ENCODE measurements at regions of chr21 and their contacts with region 1.

Region 1: GRCh38 chr21:44801468-44802395 is at the start of gene UBE2G2:
- DNase-seq: peak; percentile 59
- ATAC-seq: peak; percentile 89
- H3K4me3 ChIP-seq: peak within 1 kb of the TSS; percentile 79 to 86 (median 80)
- H3K27ac ChIP-seq: peak within 1 kb of the TSS; percentile 88
- H3K4me1 ChIP-seq: peaks cover 53% of the 10 kb centered on the region
- H3K27me3 ChIP-seq: no peaks in the 10 kb centered on the region; a peak in 1 of 5 replicates
- CTCF ChIP-seq: no peak
- EP300 ChIP-seq: no peak
- POLR2A ChIP-seq: peak; percentile 63 to 90
- RAD21 ChIP-seq: peak; percentile 58
- total RNA-seq, gene UBE2G2: 55.4 and 62.0 TPM in 2 replicates

Region 2: DNA sequence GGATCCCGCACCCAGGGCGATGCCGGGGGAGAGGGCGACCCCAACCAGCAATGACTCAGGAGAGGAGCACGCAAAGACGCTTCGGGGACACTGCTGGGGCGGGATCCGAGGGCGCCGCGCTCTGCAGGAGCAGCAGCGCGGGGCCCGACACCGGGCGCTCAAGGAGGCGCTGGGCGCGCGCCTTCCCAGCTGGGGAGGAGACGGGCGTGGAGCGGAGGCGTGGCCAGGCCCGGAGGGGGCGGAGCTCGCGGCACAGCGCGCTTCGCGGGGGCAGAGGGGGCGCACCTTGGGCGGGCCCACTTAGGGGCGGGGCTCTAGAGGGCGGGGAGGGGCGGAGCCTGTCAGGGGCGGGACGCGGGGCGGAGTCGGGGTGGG is 15.8 kb after region 1 on chr21:
- CTCF ChIA-PET with region 1: no interaction called
- POLR2A ChIA-PET with region 1: interaction called, 8 read pairs
- in situ Hi-C with region 1: no loop called
- intact Hi-C with region 1: loop called (anchors 1 kb)
- DNase-seq: peak; percentile 27
- ATAC-seq: peak; percentile 45
- H3K4me3 ChIP-seq: peak overlapping the region; percentile 68 to 88 (median 72); a peak in 5 of 6 replicates
- H3K27ac ChIP-seq: peak overlapping the region; percentile 71
- H3K4me1 ChIP-seq: peaks cover 34% of the 10 kb centered on the region
- H3K27me3 ChIP-seq: no peaks in the 10 kb centered on the region
- CTCF ChIP-seq: no peak
- EP300 ChIP-seq: no peak
- POLR2A ChIP-seq: no peak
- RAD21 ChIP-seq: no peak

Region 3: DNA sequence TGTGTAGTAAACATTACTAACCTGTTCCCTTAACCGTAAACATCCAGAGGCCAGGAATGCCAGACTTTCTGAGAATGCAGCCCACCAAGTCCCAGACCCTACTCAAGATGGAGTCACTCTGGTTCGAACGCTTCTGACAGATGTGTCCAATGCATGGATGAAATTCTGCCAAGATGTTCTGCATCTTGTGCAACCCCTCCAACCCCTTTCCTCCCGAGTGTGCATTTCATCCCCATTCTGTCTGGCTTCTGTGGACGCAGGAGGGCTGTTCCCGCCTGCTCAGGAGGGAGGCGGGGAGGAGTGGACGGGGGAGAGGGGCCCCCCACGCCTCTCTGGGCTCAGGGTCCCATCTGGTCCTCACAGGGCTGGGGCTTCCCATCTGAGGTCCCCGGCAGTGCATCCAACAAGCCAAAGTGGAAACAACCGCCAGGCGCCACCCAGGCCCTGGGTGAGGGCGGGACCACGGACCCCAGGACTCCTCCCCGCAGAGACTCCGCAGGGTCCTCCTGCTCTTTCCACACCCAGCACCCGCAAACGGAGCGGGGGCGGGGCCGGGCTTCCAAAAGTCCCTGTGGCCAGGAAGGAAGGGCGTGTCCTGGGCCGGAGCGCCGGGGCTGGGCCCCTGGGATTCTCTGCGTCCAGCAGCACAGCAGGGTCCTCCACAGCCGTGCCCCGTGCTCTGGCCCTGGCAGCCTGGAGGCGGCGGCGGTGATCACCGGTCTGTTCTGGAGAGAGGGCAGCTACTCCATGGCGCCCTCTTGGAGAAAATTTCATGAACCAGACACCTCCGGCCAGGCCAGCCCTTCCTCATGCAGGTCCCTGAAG is 43.9 kb after region 1 on chr21:
- CTCF ChIA-PET with region 1: interaction called, 4 read pairs
- POLR2A ChIA-PET with region 1: interaction called, 9 read pairs
- in situ Hi-C with region 1: loop called (anchors 5 kb)
- intact Hi-C with region 1: loop called (anchors 1 kb)
- DNase-seq: peak; percentile 76
- ATAC-seq: peak; percentile 77
- H3K4me3 ChIP-seq: peak overlapping the region; percentile 43 to 67 (median 58)
- H3K27ac ChIP-seq: no peak overlapping the region
- H3K4me1 ChIP-seq: peaks cover 52% of the 10 kb centered on the region
- H3K27me3 ChIP-seq: peaks cover 1 to 37% of the 10 kb centered on the region in 2 experiments; a peak in 4 of 5 replicates
- CTCF ChIP-seq: peak; percentile 54
- EP300 ChIP-seq: 0 out of 4 replicates have a peak, but pooled peaks of 1 of the 2 experiments have one; percentile 4
- POLR2A ChIP-seq: no peak
- RAD21 ChIP-seq: 0 out of 2 replicates have a peak, but pooled peaks have one; percentile 24

Region 4: GRCh38 chr21:44873356-44874239 is 71.9 kb after region 1 on chr21 and contains the start of gene PTTG1IP:
- CTCF ChIA-PET with region 1: no interaction called
- POLR2A ChIA-PET with region 1: interaction called, 22 read pairs
- in situ Hi-C with region 1: no loop called
- intact Hi-C with region 1: loop called (anchors 5 kb)
- DNase-seq: peak; percentile 93
- ATAC-seq: peak; percentile 70
- H3K4me3 ChIP-seq: peak within 1 kb of the TSS; percentile 71 to 94 (median 82)
- H3K27ac ChIP-seq: peak within 1 kb of the TSS; percentile 72
- H3K4me1 ChIP-seq: peaks cover 74% of the 10 kb centered on the region
- H3K27me3 ChIP-seq: no peaks in the 10 kb centered on the region; a peak in 1 of 5 replicates
- CTCF ChIP-seq: 0 out of 2 replicates have a peak, but pooled peaks have one; percentile 2
- EP300 ChIP-seq: no peak
- POLR2A ChIP-seq: peak in 1 of 2 experiments; percentile 80; a peak in 2 of 4 replicates
- RAD21 ChIP-seq: no peak
- total RNA-seq, gene PTTG1IP: 89.4 and 161 TPM in 2 replicates

Region 5: DNA sequence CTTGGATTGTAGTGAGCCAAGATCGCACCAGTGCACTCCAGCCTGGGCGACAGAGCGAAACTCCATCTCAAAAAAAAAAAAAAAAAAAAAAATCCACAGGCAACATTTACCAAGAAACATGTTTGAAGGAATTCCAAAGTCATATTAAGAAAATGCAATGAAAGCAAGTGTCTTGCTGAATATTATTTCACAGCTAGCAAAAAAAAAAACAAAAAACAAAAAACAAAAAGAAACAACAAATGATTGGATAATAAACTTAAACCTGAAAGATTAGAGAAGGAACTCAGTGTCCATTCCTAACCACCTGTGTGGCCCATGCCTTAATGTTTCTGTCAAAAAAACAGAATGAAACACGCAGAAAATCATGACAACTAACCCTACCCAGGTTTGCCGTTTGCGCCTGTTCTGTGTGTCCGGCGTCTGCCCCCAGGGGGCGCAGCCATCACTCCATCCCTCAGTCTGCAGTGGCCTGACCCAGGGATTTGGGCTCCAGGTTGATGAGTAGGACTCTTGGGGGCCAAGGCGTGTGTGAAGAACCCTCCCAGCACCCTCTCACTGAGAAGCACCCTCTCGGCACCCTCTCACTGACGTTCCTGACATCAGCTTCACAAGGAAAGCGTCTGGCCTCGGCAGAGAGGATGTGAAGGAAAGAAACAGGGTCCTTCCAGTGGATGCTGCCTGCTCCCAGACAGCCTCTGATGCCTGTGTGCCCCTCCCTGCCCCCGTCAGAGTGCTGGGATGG is 91.0 kb after region 1 on chr21:
- CTCF ChIA-PET with region 1: no interaction called
- POLR2A ChIA-PET with region 1: interaction called, 4 read pairs
- in situ Hi-C with region 1: no loop called
- intact Hi-C with region 1: loop called (anchors 5 kb)
- DNase-seq: no peak
- ATAC-seq: peak; percentile 67
- H3K4me3 ChIP-seq: no peak overlapping the region
- H3K27ac ChIP-seq: no peak overlapping the region
- H3K4me1 ChIP-seq: peaks cover 74% of the 10 kb centered on the region
- H3K27me3 ChIP-seq: peaks cover 3 to 7% of the 10 kb centered on the region in 2 experiments; a peak in 2 of 5 replicates
- CTCF ChIP-seq: peak; percentile 90
- EP300 ChIP-seq: no peak
- POLR2A ChIP-seq: no peak
- RAD21 ChIP-seq: peak; percentile 73

Region 6: DNA sequence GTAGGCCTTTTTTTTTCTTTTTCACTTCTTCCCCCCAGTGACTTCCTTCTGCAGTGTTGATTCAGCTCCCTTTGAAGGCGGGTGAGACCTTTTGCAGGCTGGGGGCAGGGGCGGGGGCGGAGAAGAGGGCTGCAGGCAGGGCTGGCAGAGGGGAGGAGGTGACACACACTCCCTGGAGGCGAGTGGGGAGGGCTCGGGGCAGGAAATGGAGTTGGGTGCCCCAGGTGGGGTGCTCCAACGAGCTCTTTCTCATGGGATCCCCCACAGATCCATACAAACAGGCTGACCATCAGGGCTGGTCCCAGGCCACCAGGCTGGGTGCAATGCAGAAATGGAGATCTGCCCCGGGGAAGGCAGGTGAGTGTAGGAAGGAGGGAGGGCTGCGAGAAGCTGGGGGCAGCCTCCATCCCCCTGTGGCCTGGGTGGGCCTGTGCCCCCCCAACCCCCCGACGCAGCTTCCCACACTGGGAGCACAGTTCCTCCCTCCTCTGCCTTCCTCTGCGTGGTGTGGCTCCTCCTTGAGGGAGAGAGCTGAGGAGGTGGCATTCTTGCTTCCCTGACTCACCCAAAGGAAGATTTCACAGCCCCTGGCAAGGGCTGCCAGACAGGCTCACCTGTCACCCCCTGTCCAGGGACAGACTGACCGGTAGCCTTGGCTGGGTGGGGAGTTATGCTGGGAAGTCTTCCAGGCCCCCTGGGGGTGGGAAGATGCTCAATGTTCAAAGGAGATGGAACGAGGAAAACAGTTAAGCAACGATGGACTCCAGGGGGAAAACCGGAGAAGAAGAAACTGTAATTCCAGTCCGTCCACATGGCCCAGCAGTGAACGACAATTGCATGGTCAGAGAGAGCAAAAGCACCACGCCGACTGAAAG is 126.1 kb after region 1 on chr21:
- CTCF ChIA-PET with region 1: no interaction called
- POLR2A ChIA-PET with region 1: interaction called, 3 read pairs
- in situ Hi-C with region 1: no loop called
- intact Hi-C with region 1: loop called (anchors 1 kb)
- DNase-seq: peak; percentile 39
- ATAC-seq: peak; percentile 48
- H3K4me3 ChIP-seq: peak overlapping the region; percentile 24 to 66 (median 49); a peak in 5 of 6 replicates
- H3K27ac ChIP-seq: no peak overlapping the region
- H3K4me1 ChIP-seq: peaks cover 67% of the 10 kb centered on the region
- H3K27me3 ChIP-seq: peaks cover 1 to 4% of the 10 kb centered on the region in 2 experiments; a peak in 3 of 5 replicates
- CTCF ChIP-seq: no peak
- EP300 ChIP-seq: peak in 1 of 2 experiments; percentile 31; a peak in 1 of 4 replicates
- POLR2A ChIP-seq: no peak
- RAD21 ChIP-seq: no peak

Measured in HepG2 (cell line).